ENCODE measurements at regions of chr12 and their contacts with region 1.

Region 1: GRCh38 chr12:1093166-1093751 is 102.2 kb downstream of the ERC1 start:
- DNase-seq: no peak
- H3K4me3 Mint-ChIP-seq: no peak overlapping the region
- H3K27ac Mint-ChIP-seq: no peak overlapping the region
- H3K4me1 Mint-ChIP-seq: peaks cover 7% of the 10 kb centered on the region
- H3K27me3 Mint-ChIP-seq: no peaks in the 10 kb centered on the region

Region 2: DNA sequence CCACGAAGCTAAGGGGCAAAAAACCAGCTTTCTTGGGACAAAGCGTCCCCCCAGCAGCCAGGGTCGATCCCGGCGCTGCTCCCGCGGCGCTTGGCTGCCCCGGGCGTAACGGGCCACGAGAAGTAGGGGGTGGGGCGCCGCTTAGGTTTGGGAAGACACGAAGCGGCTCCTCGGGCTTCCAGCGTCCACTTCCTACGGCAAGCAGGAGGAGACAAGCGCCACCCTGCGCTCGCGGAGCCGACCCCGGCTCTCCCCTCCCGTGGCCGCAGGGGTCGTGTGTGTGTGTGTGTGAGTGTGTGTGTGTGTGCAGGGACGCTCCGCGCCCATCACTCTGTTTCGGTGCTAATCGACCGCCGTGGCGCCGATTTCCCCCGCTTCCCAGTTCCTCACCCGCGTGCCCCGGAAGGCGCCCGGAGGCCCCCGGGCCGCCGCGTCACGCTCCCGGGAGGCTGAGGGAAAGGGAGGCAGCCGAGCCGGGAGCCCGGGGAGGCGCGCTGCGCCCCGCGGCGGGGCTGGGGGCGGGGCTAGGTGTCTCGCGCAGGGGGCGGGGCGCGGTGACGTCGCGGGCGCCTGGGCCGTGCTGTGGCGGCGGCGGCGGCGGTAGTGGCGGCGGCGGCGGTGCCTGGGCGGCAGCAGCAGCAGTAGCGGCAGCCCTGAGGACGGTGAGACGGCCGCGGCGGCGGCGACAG is 102.5 kb before region 1 on chr12 and contains the start of gene ERC1:
- intact Hi-C with region 1: loop called (anchors 5 kb)
- DNase-seq: peak; percentile 83
- H3K4me3 Mint-ChIP-seq: peak within 1 kb of the TSS; percentile 95
- H3K27ac Mint-ChIP-seq: peak within 1 kb of the TSS; percentile 93
- H3K4me1 Mint-ChIP-seq: peaks cover 35% of the 10 kb centered on the region
- H3K27me3 Mint-ChIP-seq: no peaks in the 10 kb centered on the region
- total RNA-seq, gene ERC1: 37.5 and 42.6 TPM in 2 replicates